Caki2 (cell line): ENCODE measurements at regions of chr12 and their contacts with region 1.

Region 1: DNA sequence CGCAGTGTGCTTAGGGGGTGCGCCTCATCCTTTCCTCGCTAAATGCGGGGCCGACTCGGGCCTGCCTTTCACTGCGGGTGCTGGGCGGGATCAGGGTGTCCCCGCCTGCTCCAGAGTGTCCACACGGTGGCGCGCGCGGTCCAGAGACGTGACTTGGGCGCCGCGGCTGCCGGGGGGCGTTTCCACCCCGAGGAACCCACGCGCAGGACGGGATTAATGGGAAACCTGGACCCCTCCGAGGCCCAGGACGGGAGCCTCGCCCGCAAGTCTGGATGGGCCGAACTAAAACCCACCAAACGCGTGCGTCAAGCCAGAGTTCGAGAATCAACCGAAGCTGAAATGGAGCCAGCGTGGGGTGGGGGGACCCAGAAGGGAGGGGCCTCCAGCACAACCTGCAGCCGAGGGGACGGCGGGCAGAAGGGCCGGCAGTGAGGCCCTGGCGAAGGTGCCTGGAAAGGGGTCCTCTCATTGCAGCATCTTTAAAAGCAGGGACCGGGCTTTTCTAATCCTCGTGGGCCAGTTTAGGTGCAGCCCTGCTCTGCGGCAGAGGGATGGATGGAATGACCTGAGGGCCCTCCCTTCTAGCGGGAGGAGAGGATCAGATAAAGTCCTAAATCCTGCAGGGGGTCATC is 93.3 kb downstream of the NINJ2 start:
- DNase-seq: peak; percentile 76

Region 2: GRCh38 chr12:442235-442884 is 127.6 kb before region 1 on chr12:
- in situ Hi-C with region 1: loop called (anchors 10 kb)
- DNase-seq: peak; percentile 19